ENCODE measurements at regions of chr21 and their contacts with region 1.

Region 1: GRCh38 chr21:28745131-28746016 is 247.3 kb downstream of the LTN1 start:
- DNase-seq: peak; percentile 72 to 92
- H3K4me3 ChIP-seq: no peak overlapping the region
- CTCF ChIP-seq: peak in 2 of 3 donors; percentile 50 to 90
- POLR2A ChIP-seq: no peak

Region 2: GRCh38 chr21:28513428-28513827 is 231.9 kb before region 1 on chr21:
- intact Hi-C with region 1: loop called (anchors 5 kb)
- DNase-seq: no peak
- H3K4me3 ChIP-seq: no peak overlapping the region
- CTCF ChIP-seq: no peak
- POLR2A ChIP-seq: no peak

Measured in lower leg skin (tissue), 4 donors.